ENCODE measurements at regions of chr7 and their contacts with region 1.

Region 1: GRCh38 chr7:123682690-123683089 is 27.0 kb downstream of the LMOD2 start:
- DNase-seq: no peak
- ATAC-seq: peak; percentile 66
- H3K4me3 Mint-ChIP-seq: no peak overlapping the region
- H3K27ac Mint-ChIP-seq: no peak overlapping the region
- H3K4me1 Mint-ChIP-seq: peaks cover 6% of the 10 kb centered on the region; the same call in 1 of the 2 replicates
- H3K27me3 Mint-ChIP-seq: no peaks in the 10 kb centered on the region
- CTCF ChIP-seq: 0 out of 2 replicates have a peak, but pooled peaks have one; percentile 28

Region 2: GRCh38 chr7:123705211-123705901 is 22.7 kb after region 1 on chr7:
- CTCF ChIA-PET with region 1: interaction called, 49 read pairs
- POLR2A ChIA-PET with region 1: no interaction called
- DNase-seq: no peak
- ATAC-seq: no peak
- H3K4me3 Mint-ChIP-seq: no peak overlapping the region
- H3K27ac Mint-ChIP-seq: no peak overlapping the region; the same call in 1 of the 2 replicates
- H3K4me1 Mint-ChIP-seq: peaks cover 2% of the 10 kb centered on the region
- H3K27me3 Mint-ChIP-seq: no peaks in the 10 kb centered on the region
- CTCF ChIP-seq: no peak

Region 3: DNA sequence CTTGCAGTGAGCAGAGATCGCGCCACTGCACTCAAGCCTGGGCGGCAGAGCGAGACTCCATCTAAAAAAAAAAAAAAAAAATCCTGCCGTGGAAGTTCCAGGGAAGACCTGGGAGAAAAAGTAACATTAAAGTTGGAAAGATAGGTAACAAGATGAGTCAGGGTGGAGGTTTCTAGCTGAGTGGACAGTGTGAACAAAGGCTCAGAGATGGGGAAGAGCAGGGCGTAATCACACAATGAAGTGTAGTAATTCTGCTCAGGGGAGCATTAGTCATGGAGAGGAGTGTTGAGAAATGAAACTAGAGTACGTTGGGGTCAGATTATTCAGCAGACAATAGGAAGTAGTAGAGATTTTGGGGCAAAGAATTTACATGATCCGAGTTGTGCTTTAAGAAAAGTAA is 87.7 kb after region 1 on chr7:
- CTCF ChIA-PET with region 1: no interaction called
- POLR2A ChIA-PET with region 1: no interaction called
- DNase-seq: no peak
- ATAC-seq: no peak
- H3K4me3 Mint-ChIP-seq: no peak overlapping the region
- H3K27ac Mint-ChIP-seq: no peak overlapping the region
- H3K4me1 Mint-ChIP-seq: peaks cover 31% of the 10 kb centered on the region
- H3K27me3 Mint-ChIP-seq: no peaks in the 10 kb centered on the region
- CTCF ChIP-seq: no peak

Region 4: GRCh38 chr7:123865517-123866117 is 182.9 kb after region 1 on chr7:
- CTCF ChIA-PET with region 1: interaction called, 10 read pairs
- POLR2A ChIA-PET with region 1: no interaction called
- DNase-seq: peak; percentile 42
- ATAC-seq: peak; percentile 95
- H3K4me3 Mint-ChIP-seq: no peak overlapping the region
- H3K27ac Mint-ChIP-seq: 0 out of 2 replicates have a peak overlapping the region, but pooled peaks have one; percentile 15
- H3K4me1 Mint-ChIP-seq: peaks cover 19% of the 10 kb centered on the region
- H3K27me3 Mint-ChIP-seq: no peaks in the 10 kb centered on the region
- CTCF ChIP-seq: peak; percentile 63

Region 5: GRCh38 chr7:123871998-123872867 is 189.5 kb after region 1 on chr7:
- CTCF ChIA-PET with region 1: interaction called, 11 read pairs
- POLR2A ChIA-PET with region 1: no interaction called
- DNase-seq: peak; percentile 55
- ATAC-seq: peak; percentile 99
- H3K4me3 Mint-ChIP-seq: no peak overlapping the region
- H3K27ac Mint-ChIP-seq: no peak overlapping the region
- H3K4me1 Mint-ChIP-seq: peaks cover 9% of the 10 kb centered on the region; the same call in 1 of the 2 replicates
- H3K27me3 Mint-ChIP-seq: no peaks in the 10 kb centered on the region
- CTCF ChIP-seq: no peak

Measured in WTC11 (cell line).